ENCODE measurements at regions of chr11 and their contacts with region 1.

Region 1: DNA sequence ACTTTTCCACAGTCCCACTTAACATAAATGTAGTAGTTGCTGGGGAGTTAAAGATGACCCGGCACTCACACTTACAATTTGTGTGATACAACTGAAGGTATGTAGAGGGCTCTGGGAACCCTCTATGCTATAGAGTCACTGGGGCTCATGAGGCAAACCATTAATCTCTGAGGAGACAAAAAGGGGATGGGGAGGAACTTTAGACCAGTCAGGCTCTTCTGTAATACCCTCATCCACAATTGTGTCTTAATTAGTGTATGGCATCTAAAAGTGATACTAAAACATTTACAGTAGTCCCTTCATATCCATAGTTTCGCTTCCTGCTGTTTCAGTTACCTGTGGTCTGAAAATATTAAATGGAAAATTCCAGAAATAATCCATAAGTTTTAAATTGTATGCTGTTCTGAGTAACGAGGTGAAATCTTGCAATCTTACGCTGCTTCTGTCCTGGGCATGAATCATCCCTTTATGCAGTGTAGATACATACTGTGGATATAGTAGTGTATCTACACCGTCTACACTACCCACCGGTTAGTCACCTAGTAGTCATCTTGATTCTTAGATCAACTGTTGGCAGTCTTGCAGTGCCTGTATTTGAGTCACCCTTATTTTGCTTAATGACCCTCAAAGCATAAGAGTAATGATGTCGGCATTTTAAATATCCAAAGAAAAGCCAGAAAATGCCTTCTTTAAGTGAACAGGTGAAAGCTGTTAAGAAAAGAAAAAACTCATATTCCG is 12.2 kb downstream of the CBL start:
- DNase-seq: no peak

Region 2: GRCh38 chr11:118988280-118988679 is 230.0 kb before region 1 on chr11:
- intact Hi-C with region 1: no loop called
- DNase-seq: no peak

Region 3: DNA sequence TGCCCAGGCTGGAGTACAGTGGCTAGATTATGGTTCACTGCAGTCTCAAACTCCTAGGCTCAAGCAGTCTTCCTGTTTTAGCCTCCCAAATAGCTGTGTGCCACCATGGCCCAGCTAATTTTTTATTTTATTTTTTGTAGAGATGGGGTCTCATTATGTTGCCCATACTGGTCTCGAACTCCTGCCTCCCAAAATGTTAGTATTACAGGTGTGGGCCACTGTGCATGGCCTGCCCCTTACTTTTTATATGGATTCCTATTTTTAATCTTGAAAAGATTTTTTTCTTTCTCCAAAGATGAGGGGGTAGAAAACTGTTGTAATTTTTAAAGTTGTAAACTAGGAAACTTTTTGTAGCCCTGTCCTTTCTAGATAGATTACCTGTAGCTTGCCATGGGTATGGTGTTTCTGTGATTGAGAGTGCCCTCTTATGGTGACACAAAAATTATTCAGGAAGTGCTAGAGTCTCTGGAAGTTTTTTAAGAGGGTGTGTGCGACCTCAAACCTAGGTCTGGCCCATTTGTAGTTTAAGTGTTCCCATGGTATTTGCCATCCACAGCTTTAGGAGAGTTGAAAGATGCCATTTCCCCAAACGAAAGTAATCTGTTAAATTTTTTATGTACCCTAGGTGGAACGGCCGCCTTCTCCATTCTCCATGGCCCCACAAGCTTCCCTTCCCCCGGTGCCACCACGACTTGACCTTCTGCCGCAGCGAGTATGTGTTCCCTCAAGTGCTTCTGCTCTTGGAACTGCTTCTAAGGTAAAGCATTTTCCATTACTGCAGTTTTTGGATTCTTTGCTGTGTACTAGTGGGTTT is 66.2 kb after region 1 on chr11:
- intact Hi-C with region 1: loop called (anchors 10 kb)
- DNase-seq: no peak